ENCODE measurements at regions of chr13 and their contacts with region 1.

Region 1: DNA sequence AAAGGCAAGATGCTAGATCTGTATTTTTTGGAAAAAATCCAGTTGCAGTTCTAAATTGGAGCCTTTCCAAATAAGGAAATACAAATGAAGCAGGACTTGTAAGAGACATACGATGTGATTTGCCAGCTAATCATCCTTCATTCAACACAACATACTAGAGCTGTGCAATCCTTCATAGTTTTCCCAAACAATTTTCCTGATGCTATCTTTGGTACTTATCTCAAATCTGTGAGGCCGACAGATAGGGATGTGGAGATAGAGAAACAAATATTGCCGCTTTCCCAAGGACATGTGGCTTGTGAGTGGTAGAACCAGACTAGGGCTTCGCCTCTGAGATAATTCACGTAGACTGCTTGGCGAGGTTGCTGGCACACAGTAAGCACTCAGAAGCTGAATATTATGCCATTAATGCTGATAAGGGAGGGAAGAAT is 176.6 kb downstream of the LMO7 start:
- DNase-seq: peak; percentile 35
- ATAC-seq: no peak
- H3K4me3 ChIP-seq: no peak overlapping the region
- H3K27ac ChIP-seq: peak overlapping the region; percentile 40; the same call in 1 of the 2 replicates
- H3K4me1 ChIP-seq: peaks cover 12% of the 10 kb centered on the region
- H3K27me3 ChIP-seq: no peaks in the 10 kb centered on the region
- CTCF ChIP-seq: no peak
- POLR2A ChIP-seq: no peak
- RAD21 ChIP-seq: no peak

Region 2: DNA sequence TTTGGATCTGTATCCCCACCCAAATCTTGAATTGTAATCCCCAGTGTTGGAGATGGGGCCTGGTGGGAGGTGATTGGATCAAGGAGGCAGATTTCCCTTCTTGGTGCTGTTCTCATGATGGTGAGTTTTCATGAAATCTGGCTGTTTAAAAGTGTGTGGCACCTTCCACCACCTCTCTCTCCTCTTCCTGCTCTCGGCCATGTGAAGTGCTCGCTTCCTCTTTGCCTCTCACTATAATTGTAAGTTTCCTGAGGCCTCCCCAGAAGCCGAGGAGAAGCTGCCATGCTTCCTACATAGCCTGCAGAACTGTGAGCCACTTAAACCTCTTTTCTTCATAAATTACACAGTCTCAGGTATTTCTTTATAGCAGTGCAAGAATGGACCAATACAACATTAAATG is 290.8 kb before region 1 on chr13:
- CTCF ChIA-PET with region 1: no interaction called
- POLR2A ChIA-PET with region 1: interaction called, 16 read pairs
- dilution Hi-C with region 1: no loop called
- in situ Hi-C with region 1: no loop called
- intact Hi-C with region 1: no loop called
- DNase-seq: no peak
- ATAC-seq: no peak
- H3K4me3 ChIP-seq: no peak overlapping the region
- H3K27ac ChIP-seq: no peak overlapping the region
- H3K4me1 ChIP-seq: no peaks in the 10 kb centered on the region
- H3K27me3 ChIP-seq: no peaks in the 10 kb centered on the region
- CTCF ChIP-seq: no peak
- POLR2A ChIP-seq: no peak
- RAD21 ChIP-seq: no peak

Measured in IMR-90 (cell line).